ENCODE measurements at regions of chr10 and their contacts with region 1.

Region 1: GRCh38 chr10:34815185-34816084 is at the start of gene PARD3:
- DNase-seq: peak; percentile 79
- H3K4me3 ChIP-seq: peak within 1 kb of the TSS; percentile 78
- H3K27ac ChIP-seq: peak within 1 kb of the TSS; percentile 56
- H3K4me1 ChIP-seq: peaks cover 14% of the 10 kb centered on the region
- H3K27me3 ChIP-seq: no peaks in the 10 kb centered on the region
- CTCF ChIP-seq: no peak
- total RNA-seq, gene PARD3: 28.0 and 32.3 TPM in 2 replicates

Region 2: GRCh38 chr10:33523236-33523792 is 1292.1 kb before region 1 on chr10:
- CTCF ChIA-PET with region 1: no interaction called
- POLR2A ChIA-PET with region 1: interaction called, 12 read pairs
- intact Hi-C with region 1: no loop called
- DNase-seq: no peak
- H3K4me3 ChIP-seq: no peak overlapping the region
- H3K27ac ChIP-seq: no peak overlapping the region
- H3K4me1 ChIP-seq: peaks cover 10% of the 10 kb centered on the region
- H3K27me3 ChIP-seq: no peaks in the 10 kb centered on the region
- CTCF ChIP-seq: no peak